Endothelial cell of umbilical vein (primary cell): ENCODE measurements at regions of chr4 and their contacts with region 1.

Region 1: GRCh38 chr4:56871371-56871866 is 36.3 kb upstream of the REST start:
- DNase-seq: no peak
- H3K4me3 ChIP-seq: no peak overlapping the region
- H3K27ac ChIP-seq: no peak overlapping the region
- H3K4me1 ChIP-seq: no peaks in the 10 kb centered on the region
- H3K27me3 ChIP-seq: peaks cover 0 to 4% of the 10 kb centered on the region in 2 experiments
- CTCF ChIP-seq: no peak
- POLR2A ChIP-seq: no peak

Region 2: DNA sequence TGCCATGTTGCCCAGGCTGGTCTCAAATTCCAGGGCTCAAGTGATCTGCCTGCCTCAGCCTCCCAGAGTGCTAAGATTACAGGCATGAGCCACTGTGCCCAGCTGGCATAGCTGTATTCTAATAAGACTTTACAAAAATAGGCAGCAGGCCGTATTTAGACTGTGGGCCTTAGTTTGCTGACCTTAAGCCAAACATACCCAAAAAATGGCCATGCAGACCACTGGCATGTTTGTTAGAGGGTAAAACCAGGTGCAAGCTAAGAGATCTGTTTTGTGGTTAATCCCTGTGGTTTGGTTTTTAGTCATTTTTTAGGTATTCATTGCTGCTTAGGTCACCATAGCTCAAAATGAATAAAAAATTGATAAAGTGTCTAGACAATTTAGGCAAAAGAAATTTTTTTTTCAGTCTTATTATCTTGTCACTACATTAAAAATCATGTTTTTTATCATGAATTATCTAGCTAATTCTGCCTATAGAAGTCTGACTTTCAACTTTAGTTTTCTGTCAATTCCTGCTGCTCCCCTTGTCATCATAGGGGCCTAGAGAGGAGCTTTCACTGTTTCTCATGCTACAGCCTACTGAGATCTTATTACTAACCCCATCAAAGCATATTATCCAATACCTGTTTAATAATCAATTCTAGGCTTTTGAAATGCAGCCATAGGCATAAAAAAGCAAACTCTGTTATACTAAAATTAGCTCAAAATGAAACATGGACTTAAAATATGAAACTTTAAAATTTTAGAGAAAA is 42.5 kb before region 1 on chr4:
- CTCF ChIA-PET with region 1: no interaction called
- POLR2A ChIA-PET with region 1: interaction called, 12 read pairs
- dilution Hi-C with region 1: no loop called
- intact Hi-C with region 1: no loop called
- DNase-seq: no peak
- H3K4me3 ChIP-seq: no peak overlapping the region
- H3K27ac ChIP-seq: no peak overlapping the region
- H3K4me1 ChIP-seq: no peaks in the 10 kb centered on the region
- H3K27me3 ChIP-seq: no peaks in the 10 kb centered on the region
- CTCF ChIP-seq: no peak
- POLR2A ChIP-seq: no peak